Activated CD4-positive, alpha-beta T cell treated with anti-CD3 and anti-CD28 coated beads for 36 hours (primary cell): ENCODE measurements at regions of chr19 and their contacts with region 1.

Region 1: DNA sequence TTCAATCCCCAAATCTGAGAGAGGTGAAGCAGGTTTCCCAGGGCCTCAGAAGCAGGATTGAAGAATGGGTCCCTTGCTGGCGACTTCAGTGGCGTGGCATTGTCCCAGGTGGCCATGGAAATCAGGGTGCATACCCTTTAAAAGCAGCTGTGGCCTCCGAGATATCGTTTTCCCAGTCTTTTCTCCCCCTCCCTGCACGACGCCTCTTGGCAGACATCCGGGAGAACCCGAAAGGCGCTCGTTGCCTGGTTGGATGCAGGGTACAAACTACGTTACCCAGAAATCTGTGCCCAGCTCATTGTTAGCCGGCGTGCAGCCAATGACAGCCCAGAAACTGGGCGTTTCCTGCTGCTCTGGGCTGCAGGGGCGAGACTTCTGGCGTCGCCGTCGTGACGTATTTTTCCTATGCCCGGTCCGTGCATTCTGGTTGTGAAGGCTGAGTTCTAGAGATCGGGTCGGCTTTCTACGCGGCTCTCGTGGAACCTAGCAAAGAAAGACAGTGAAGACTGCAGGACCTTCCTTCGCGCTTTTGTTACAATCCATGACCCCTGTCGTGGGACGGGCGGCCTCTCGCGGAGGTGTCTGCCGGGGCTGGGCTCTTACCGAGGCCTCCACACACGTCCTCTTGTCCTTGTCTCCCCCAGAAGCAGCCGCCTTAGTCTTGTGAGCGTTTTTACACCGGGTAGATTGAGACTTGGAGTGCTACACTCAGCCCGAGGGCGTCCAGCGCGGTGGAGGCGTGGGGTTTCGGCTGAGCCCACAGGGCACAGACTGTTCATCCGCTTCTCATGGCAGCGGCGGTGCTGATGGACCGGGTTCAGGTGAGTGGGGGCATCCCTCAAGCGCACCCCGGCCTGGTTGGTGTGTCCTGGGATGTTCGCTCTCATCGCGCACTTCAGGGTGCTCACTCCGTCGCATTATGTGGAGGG is at the start of gene ZNF304:
- DNase-seq: peak; percentile 94
- ATAC-seq: peak; percentile 100
- H3K4me3 Mint-ChIP-seq: peak within 1 kb of the TSS; percentile 96
- H3K27ac Mint-ChIP-seq: peak within 1 kb of the TSS; percentile 90
- H3K4me1 Mint-ChIP-seq: peaks cover 25% of the 10 kb centered on the region
- H3K27me3 Mint-ChIP-seq: peaks cover 4% of the 10 kb centered on the region
- total RNA-seq, gene ZNF304: 6.2 TPM

Region 2: DNA sequence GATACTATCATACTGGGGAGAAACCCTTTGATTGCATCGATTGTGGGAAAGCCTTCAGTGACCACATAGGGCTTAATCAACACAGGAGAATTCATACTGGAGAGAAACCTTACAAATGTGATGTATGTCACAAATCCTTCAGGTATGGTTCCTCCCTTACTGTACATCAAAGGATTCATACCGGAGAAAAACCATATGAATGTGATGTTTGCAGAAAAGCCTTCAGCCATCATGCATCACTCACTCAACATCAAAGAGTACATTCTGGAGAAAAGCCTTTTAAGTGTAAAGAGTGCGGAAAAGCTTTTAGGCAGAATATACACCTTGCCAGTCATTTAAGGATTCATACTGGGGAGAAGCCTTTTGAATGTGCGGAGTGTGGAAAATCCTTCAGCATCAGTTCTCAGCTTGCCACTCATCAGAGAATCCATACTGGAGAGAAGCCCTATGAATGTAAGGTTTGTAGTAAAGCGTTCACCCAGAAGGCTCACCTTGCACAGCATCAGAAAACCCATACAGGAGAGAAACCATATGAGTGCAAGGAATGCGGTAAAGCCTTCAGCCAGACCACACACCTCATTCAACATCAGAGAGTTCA is 796.8 kb before region 1 on chr19:
- CTCF ChIA-PET with region 1: no interaction called
- POLR2A ChIA-PET with region 1: no interaction called
- intact Hi-C with region 1: no loop called
- DNase-seq: no peak
- ATAC-seq: no peak
- H3K4me3 Mint-ChIP-seq: no peak overlapping the region
- H3K27ac Mint-ChIP-seq: no peak overlapping the region
- H3K4me1 Mint-ChIP-seq: no peaks in the 10 kb centered on the region
- H3K27me3 Mint-ChIP-seq: no peaks in the 10 kb centered on the region

Region 3: GRCh38 chr19:57320180-57321084 is 30.7 kb before region 1 on chr19 and contains the start of gene ZNF543:
- CTCF ChIA-PET with region 1: no interaction called
- POLR2A ChIA-PET with region 1: no interaction called
- intact Hi-C with region 1: loop called in 1 of 2 experiments (anchors 1 kb)
- DNase-seq: peak; percentile 97
- ATAC-seq: peak; percentile 98
- H3K4me3 Mint-ChIP-seq: peak within 1 kb of the TSS; percentile 94
- H3K27ac Mint-ChIP-seq: peak within 1 kb of the TSS; percentile 93
- H3K4me1 Mint-ChIP-seq: peaks cover 24% of the 10 kb centered on the region
- H3K27me3 Mint-ChIP-seq: peaks cover 22% of the 10 kb centered on the region
- total RNA-seq, gene ZNF543: 5.8 to 6.2 TPM